Right ventricle myocardium superior (tissue), 1 donor: ENCODE measurements at regions of chr1 and their contacts with region 1.

Region 1: DNA sequence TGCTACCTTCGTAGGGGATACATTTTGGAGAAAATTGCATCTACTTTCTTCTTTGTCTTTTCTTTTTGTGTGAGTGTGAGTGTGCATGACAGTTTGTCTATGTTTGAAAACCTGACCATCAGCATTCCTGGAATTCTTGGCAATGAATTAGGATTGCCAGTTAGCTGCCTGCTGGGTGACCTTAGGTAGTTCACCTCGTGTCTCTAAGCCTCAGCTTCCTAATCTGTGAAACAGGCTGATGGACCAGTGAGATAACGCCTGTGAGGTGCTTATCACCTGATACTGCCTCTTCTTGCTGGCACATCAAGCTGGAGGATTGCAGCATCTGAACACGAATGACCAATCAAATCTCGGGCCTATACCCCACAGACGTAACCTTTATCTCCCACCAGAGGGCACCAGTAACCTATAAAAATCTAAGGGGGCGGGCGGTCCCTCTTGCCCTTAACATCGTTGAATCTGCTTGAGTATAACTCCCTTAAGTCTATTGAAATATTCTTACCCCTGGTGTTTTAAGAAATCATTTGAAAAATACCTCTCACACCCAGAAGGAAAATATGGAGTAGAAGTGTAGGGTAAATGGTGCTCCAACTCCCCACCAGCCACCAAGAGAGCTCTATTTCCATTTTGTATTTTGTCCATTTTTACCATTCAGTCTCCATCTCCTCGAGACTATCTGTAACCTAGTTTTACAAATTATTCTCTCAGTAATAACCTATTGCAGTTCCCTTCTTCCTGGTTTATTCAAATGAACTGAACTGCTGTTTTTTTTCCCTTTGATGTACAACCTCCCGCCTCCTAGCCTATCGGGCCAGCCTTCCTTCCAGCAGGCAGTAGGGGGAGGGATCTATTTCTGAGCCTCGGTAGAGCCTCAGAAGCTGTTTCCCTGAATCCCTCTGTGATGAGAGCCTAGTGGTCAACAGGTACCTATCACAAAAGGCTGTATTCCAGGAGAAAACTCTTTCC is 49.7 kb downstream of the MDM4 start:
- DNase-seq: peak; percentile 51
- ATAC-seq: peak; percentile 85

Region 2: GRCh38 chr1:204190212-204191211 is 375.4 kb before region 1 on chr1:
- intact Hi-C with region 1: no loop called
- DNase-seq: peak; percentile 44
- ATAC-seq: peak; percentile 71

Region 3: DNA sequence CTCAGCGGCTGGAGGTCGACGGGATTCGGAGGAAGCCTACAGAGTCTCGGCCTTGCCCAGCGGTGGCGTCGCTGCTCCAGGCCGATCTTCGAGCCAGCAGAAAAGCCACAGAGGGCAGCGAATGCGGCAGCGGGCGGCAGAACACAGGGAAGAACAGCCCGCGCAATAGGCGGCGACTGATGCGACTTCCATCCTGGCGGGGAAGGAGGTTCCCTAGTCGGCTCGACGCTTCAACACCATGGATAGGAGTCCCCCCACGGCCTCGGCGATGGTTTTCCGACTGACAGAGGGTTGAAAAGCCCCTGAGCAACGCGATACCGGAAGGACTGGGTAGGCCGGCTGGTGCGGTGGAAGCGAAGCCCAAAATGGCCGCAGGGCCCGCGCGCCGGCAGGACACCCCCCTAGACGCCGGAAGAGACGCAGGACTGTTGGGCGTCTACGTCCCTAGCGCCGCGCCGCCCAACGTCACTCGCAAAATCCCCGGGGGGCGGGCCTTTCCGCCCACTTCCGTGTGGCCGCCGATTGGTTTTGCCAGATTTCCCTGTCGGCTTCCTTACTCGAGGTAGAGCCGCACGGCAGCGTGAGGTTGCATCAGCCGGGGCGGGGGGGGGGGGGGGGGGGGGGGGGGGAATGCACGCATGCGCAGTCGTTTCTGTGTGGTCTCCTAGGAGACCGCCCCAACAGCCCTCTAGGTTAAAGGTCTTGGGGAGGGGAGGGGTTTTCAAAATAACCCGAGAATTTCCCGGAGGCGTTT is 154.3 kb before region 1 on chr1 and contains the start of gene PPP1R15B:
- intact Hi-C with region 1: no loop called
- DNase-seq: peak; percentile 97
- ATAC-seq: peak; percentile 93
- total RNA-seq, gene PPP1R15B: 19.7 TPM

Region 4: GRCh38 chr1:204506961-204507387 is 58.9 kb before region 1 on chr1:
- intact Hi-C with region 1: no loop called
- DNase-seq: peak; percentile 62
- ATAC-seq: peak; percentile 80

Region 5: DNA sequence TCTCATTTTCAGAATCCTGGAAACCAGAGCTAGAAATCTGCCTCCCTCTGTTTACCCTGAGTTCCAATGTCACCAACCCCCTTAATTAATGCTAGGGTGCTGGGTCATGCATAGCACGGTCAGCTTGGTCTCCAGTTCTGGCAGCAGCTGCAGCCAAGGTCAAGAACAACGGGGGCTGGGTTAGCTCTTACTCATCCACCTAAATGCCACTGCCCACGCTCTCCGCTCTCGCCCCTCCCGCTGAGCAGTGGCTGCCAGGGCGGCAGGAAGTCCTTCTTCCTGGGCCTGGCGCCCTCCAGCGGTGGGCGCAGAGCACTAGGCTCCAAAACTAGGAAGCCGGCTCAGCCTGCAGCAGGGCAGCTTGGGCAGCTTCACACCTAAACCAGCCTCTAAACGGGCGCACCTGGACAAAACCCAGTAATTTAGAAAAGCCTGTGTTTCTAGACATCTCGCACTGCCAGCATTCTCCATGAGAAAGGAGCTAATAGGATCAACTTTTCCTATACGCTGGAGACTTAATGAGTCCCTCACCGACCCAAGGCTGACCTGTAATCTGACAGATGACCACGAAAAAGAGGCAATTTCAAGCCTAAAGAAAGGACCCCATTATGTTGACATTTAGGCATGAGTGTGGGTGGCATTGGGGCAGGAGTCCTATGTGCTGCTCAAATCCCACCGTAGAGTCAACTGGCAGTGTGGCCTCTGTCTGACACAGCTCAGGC is 198.0 kb after region 1 on chr1:
- intact Hi-C with region 1: loop called (anchors 5 kb)
- DNase-seq: peak; percentile 78
- ATAC-seq: peak; percentile 88

Region 6: GRCh38 chr1:204806943-204807687 is 241.2 kb after region 1 on chr1:
- intact Hi-C with region 1: loop called (anchors 5 kb)
- DNase-seq: peak; percentile 85
- ATAC-seq: peak; percentile 97

Region 7: GRCh38 chr1:204941421-204942338 is 375.8 kb after region 1 on chr1:
- intact Hi-C with region 1: loop called (anchors 10 kb)
- DNase-seq: peak; percentile 77
- ATAC-seq: peak; percentile 83